ENCODE measurements at regions of chr20 and their contacts with region 1.

Region 1: GRCh38 chr20:62793912-62794724 is 2.2 kb upstream of the MRGBP start:
- DNase-seq: peak; percentile 98
- CTCF ChIP-seq: no peak

Region 2: GRCh38 chr20:62652051-62652926 is 141.8 kb before region 1 on chr20:
- in situ Hi-C with region 1: loop called (anchors 25 kb)
- DNase-seq: peak; percentile 93
- CTCF ChIP-seq: no peak

Region 3: DNA sequence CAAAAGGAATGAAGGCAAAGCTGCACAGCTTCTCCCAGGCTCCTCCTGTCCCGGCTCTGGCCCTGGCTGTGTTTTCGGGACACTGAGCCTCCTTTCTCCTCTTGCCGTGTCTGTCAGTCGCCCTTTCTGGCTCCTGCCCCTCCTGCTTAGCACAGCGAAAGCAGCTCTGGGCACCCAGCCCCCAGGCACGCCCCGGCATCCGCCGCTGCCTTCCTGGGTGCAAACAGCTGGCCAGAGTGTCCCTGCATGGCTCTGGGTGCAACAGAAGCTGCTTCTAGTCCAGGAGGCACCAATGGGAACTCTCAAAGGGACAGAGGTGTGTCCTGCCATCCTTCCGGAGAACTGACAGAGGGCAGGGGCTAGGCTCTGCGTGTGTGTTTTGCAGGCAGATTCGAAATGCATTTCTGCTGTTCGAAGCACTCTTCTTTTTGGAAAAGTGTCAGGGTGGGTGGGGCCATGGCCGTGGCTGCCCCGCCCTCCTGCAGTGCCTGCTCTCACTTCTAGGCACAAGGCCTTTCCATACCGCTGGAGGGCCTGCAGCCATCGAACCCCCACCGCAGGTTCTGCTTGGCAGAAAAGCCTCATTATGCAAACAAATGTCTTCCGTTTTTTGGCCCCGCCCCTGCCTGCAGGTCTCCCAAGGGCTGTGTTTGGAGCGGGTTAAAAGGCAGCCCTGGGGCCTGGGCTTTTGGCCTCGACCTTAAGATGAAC is 38.2 kb after region 1 on chr20:
- in situ Hi-C with region 1: no loop called
- DNase-seq: peak; percentile 78
- CTCF ChIP-seq: no peak

Region 4: DNA sequence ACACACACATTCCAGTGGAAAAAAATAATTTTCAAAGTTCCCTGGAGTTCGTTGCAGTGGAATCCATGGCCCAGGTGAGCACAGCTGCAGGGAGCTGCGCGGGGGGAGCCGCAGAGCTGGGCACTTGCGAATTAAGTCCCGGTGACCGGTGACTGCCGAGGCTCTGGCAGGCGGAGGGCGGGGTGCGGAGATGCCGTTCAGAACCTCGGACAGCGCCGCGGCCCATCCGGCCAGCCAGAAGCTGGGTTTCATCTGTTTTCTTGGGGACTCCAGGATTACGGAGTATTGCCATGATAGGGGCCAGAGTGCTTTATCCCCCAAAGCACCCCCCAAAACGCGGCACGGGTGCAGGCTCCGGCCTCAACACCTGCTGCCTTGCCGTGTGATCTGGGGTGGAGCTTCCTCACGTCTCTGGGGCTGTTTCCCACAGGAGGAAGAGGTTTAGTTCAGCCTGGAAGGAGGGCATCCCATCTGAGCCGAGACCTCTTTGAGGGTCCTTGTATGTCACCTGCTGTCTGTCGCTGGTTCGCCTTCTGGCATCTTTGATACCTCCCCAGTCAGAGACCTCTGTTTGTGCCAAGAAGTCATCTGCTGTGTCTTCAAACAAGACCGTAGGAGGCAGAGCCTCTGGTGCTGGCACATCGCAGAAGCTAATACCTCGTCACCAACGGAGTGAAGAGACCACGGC is 322.4 kb after region 1 on chr20:
- in situ Hi-C with region 1: no loop called
- DNase-seq: peak; percentile 72
- CTCF ChIP-seq: no peak

Region 5: GRCh38 chr20:63351811-63352591 is 557.9 kb after region 1 on chr20:
- in situ Hi-C with region 1: no loop called
- DNase-seq: no peak
- CTCF ChIP-seq: no peak

Measured in GM13976 (cell line).